ENCODE measurements at regions of chr1 and their contacts with region 1.

Region 1: DNA sequence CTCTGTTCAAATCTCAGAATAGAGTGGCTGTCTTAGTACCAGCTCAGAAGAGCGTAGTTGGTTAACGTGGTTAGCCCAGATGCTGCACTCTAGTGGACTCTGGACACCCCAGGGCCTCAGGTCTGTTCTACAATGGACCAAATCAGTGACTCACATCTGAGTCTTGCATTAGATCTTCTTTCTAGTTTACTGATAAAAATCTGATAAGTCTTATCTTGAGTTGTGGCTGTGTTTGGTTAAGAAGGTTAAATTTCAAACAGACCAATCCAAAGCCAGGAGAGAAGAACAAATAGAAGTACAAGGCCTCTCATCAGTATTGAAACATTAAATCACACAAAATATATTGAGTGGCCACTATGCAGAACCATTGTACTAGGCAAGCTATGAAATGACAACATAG is 104.1 kb downstream of the NR5A2 start:
- DNase-seq: peak; percentile 14
- H3K4me3 ChIP-seq: no peak overlapping the region
- H3K27ac ChIP-seq: no peak overlapping the region
- H3K4me1 ChIP-seq: no peaks in the 10 kb centered on the region
- H3K27me3 ChIP-seq: no peaks in the 10 kb centered on the region
- CTCF ChIP-seq: no peak
- POLR2A ChIP-seq: no peak

Region 2: DNA sequence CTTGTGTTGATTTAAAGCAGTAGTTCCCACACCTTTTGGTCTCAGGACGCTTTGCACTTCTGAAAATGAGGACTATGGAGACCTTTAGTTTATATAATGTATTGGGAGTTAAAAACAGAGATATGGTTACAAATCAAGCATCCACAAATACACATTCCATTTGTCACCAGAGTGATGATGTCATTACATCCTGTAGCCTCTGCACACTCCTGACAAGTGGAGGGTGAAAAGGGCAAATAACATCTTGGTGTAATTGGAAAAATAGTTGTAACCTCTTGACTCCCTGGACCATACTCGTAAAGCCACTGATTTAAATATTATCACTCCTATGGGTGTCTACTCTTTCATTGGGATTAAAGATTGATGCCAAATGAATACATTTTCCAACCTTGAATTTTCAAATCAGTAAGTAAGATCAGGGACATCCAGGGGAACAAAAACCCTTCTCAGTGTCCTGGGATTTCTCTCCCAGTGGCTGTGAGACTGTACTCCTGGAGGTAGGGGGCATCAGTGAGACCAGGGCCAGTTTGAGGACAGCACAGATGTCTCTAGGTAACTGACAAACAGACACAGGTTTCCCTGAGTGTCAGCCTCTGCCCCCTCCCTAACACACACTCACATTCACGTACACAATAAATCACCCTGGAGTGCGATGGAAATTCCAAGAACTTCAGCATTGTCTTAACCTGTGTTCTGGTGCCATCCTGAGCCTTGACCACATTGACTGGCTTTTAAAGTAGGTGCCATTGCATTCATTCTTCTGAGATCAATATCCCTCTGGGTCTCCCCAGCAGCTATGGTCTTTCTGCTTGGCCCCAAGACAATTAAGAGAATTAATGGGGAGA is 41.1 kb before region 1 on chr1:
- CTCF ChIA-PET with region 1: no interaction called
- POLR2A ChIA-PET with region 1: no interaction called
- dilution Hi-C with region 1: no loop called
- intact Hi-C with region 1: loop called (anchors 2 kb)
- DNase-seq: peak; percentile 83
- H3K4me3 ChIP-seq: no peak overlapping the region
- H3K27ac ChIP-seq: no peak overlapping the region
- H3K4me1 ChIP-seq: peaks cover 10% of the 10 kb centered on the region
- H3K27me3 ChIP-seq: no peaks in the 10 kb centered on the region
- CTCF ChIP-seq: peak in 1 of 2 donors; percentile 29
- POLR2A ChIP-seq: no peak

Region 3: DNA sequence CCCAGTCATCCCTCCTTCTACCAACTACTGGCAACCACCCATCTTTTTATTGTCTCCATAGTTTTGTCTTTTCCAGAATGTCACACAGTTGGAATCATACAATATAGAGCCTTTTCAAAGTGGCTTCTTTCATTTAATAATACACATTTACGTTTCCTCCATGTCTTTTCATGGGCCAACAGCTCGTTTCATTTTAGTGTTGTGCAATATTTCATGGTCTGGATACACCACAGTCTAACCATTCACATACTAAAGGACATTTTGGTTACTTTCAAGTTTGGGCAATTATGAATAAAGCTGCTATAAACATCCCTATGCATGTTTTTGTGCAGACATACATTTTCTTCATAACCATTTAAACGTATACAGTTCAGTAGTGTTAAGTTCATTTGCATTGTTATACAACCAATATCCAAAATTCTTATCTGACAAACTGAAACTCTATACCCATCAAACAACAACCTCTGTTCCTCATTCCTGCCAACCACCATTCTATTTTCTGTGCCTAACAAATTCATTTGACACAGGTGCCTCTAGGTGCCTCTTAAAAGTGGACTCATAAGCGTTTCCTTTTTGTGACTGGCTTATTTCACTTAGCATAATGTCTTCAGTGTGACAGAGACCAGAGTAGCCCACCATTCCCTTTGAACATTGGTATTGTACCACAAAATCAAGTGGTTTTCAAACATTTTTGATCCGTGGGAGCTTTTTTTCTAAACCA is 34.0 kb after region 1 on chr1:
- CTCF ChIA-PET with region 1: no interaction called
- POLR2A ChIA-PET with region 1: no interaction called
- dilution Hi-C with region 1: no loop called
- intact Hi-C with region 1: no loop called
- DNase-seq: no peak
- H3K4me3 ChIP-seq: no peak overlapping the region
- H3K27ac ChIP-seq: no peak overlapping the region
- H3K4me1 ChIP-seq: no peaks in the 10 kb centered on the region
- H3K27me3 ChIP-seq: no peaks in the 10 kb centered on the region
- CTCF ChIP-seq: no peak
- POLR2A ChIP-seq: no peak

Region 4: GRCh38 chr1:200364091-200364759 is 232.6 kb after region 1 on chr1:
- CTCF ChIA-PET with region 1: no interaction called
- POLR2A ChIA-PET with region 1: no interaction called
- dilution Hi-C with region 1: no loop called
- intact Hi-C with region 1: no loop called
- DNase-seq: peak; percentile 32
- H3K4me3 ChIP-seq: no peak overlapping the region
- H3K27ac ChIP-seq: no peak overlapping the region
- H3K4me1 ChIP-seq: peaks cover 19% of the 10 kb centered on the region
- H3K27me3 ChIP-seq: no peaks in the 10 kb centered on the region
- CTCF ChIP-seq: no peak
- POLR2A ChIP-seq: no peak